HCT116 (cell line): ENCODE measurements at regions of chr2 and their contacts with region 1.

Region 1: DNA sequence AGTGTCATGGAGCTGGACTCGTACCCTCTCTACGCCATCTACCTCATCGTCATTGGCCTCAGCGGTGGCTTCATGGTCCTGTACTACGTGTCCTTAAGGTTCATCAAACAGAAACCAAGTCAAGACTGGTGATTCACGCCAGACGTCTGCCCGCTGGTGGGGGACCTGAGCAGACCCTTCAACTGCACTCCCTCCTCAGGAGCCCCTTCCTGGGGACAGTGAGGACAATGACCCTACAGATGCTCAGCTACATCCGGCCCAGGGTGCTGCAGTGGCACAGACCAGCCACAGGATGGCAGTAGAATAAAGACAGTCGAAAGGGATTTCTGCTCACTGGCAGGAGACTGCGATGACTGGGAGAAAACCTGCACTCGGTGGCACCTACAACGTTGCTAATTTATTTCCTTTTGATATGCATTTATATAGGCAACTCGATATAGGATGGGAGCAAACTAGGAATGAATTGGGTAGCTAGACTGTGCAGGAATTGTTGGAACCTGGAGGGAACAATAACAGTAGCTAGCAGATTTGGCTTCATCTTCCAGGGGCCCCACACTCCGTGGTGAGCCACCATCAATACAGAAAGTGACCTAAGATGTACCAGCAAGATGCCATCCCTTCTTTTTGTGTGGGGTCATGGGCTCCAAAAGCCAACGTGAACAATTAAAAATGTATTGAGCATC is 39.2 kb downstream of the ABCG8 start:
- DNase-seq: peak; percentile 23
- ATAC-seq: peak; percentile 85
- H3K4me3 ChIP-seq: no peak overlapping the region
- H3K27ac ChIP-seq: no peak overlapping the region
- H3K4me1 ChIP-seq: 0 out of 4 replicates have a peak, but pooled peaks cover 0 to 6% of the 10 kb centered on the region in 2 experiments
- H3K27me3 ChIP-seq: 0 out of 2 replicates have a peak, but pooled peaks cover 4% of the 10 kb centered on the region
- CTCF ChIP-seq: peak; percentile 68 to 98 (median 97)
- POLR2A ChIP-seq: no peak
- RAD21 ChIP-seq: peak; percentile 93

Region 2: DNA sequence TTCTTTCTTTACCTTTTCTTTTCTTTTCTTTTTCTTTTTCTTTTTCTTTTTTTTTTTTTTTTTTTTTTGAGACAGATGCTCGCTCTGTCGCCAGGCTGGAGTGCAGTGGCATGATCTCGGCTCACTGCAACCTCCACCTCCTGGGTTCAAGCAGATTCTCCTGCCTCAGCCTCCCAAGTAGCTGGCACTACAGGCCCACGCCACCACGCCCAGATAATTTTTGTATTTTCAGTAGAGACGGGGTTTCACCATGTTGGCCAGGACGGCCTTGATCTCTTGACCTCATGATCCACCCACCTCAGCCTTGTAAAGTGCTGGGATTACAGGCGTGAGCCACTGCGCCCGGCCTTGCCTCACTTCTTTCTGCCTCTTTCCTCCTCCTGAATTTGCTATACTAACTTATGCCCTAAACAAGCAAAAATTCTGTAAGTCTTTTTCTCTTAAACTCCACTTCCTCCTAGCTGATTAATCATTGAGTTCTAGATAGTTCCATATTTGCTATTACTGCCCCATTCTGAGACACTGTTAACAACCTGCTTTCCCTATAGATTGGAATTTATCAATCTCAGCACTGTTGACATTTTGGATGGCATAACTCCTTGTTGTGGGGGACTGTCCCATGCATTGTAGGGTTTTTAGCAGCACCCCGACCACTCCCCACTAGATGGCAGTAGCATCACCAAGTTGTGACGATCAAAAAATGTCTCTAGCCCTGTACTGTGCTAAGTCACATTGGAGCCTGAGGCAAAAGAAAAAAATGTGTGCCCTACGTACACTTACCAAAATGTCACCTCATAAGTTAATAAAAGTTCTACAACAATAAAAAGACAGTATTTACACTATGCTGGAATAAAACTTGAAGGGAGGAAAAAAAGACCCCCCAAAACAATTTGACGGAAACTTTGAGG is 265.7 kb before region 1 on chr2:
- CTCF ChIA-PET with region 1: no interaction called
- POLR2A ChIA-PET with region 1: no interaction called
- RAD21 ChIA-PET with region 1: no interaction called
- intact Hi-C with region 1: loop called (anchors 10 kb)
- DNase-seq: peak; percentile 74
- ATAC-seq: peak; percentile 94
- H3K4me3 ChIP-seq: no peak overlapping the region
- H3K27ac ChIP-seq: no peak overlapping the region
- H3K4me1 ChIP-seq: no peaks in the 10 kb centered on the region
- H3K27me3 ChIP-seq: no peaks in the 10 kb centered on the region
- CTCF ChIP-seq: peak; percentile 54 to 92 (median 92); a peak in 5 of 6 replicates
- POLR2A ChIP-seq: no peak
- RAD21 ChIP-seq: peak; percentile 81

Region 3: DNA sequence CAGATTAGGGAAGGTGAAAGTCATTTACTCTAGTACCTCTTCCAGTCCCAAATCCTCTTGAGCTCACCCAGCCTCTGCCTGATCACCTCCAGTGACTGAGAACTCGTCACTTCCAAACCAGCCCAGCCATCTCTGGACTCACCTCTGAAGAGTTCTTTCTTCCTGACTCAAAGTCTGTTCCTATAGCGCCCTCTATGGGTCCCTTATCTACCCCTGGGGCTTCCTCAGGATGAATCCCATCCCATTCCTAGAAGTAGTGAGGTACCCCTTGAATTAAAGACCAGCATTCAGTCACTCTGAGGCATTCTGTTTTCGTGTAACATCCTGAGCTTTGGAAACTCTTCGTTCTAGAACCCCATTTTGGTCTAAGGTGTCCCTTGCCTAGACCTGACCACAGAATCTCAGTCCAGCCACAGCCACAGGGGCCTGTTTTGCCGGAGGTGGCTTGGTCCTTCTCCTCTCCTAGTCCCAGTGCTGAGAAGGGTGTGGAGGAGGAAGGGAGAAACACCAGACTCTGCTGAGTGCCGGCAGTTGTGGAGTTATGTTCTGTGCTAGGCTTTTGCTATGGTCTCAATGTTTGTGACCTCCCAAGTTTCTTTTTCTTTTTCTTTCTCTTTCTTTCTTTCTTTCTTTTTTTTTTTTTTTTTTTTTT is 1096.3 kb after region 1 on chr2:
- CTCF ChIA-PET with region 1: no interaction called
- POLR2A ChIA-PET with region 1: no interaction called
- RAD21 ChIA-PET with region 1: no interaction called
- intact Hi-C with region 1: loop called (anchors 5 kb)
- DNase-seq: peak; percentile 73
- ATAC-seq: peak; percentile 97
- H3K4me3 ChIP-seq: no peak overlapping the region
- H3K27ac ChIP-seq: no peak overlapping the region
- H3K4me1 ChIP-seq: no peaks in the 10 kb centered on the region
- H3K27me3 ChIP-seq: no peaks in the 10 kb centered on the region
- CTCF ChIP-seq: peak; percentile 73 to 90 (median 89); a peak in 5 of 6 replicates
- POLR2A ChIP-seq: no peak
- RAD21 ChIP-seq: peak; percentile 88

Region 4: DNA sequence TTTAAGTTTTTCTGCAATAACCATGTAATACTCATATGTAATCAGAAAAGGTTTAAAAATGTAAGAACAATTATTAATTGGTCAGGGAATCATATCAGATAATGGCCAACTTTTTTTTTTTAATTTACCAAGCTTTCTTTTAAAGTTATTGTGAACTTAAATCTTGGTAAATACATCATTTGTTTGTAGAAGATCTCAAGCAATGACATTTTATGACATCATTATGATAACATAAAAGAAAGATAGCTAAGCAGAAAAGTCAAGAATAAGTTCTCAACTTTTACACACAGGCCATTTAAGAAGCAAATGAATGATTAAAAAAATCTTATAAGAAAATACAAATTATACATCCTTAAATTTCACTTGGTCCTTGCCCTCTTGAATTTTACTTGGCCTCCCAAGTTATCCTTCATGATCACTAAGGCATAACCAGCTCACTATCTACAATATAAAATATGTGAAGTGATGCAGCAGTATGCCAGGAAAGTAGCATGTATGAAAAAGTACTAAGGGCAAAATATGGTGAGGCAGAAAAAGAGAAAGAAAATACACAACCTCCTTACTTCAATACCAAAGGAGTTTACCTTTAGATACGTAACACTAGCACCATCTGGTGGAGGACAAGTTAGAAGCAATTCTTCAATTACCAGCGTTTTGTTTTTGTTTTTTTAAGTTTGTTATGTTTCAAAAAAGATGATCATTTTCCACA is 1616.5 kb after region 1 on chr2:
- CTCF ChIA-PET with region 1: no interaction called
- POLR2A ChIA-PET with region 1: no interaction called
- RAD21 ChIA-PET with region 1: no interaction called
- intact Hi-C with region 1: loop called (anchors 10 kb)
- DNase-seq: peak; percentile 40
- ATAC-seq: peak; percentile 61; the same call in 1 of the 2 replicates
- H3K4me3 ChIP-seq: no peak overlapping the region
- H3K27ac ChIP-seq: no peak overlapping the region
- H3K4me1 ChIP-seq: no peaks in the 10 kb centered on the region
- H3K27me3 ChIP-seq: no peaks in the 10 kb centered on the region
- CTCF ChIP-seq: peak; percentile 70 to 80 (median 78)
- POLR2A ChIP-seq: no peak
- RAD21 ChIP-seq: peak; percentile 89